T-cell (primary cell): ENCODE measurements at regions of chr10 and their contacts with region 1.

Region 1: GRCh38 chr10:74244097-74244685 is 93.2 kb downstream of the ADK start:
- DNase-seq: peak in 9 of 35 experiments; percentile 9 to 70 (median 19)
- ATAC-seq: no peak
- H3K4me3 ChIP-seq: no peak overlapping the region
- H3K4me3 Mint-ChIP-seq: no peak overlapping the region
- H3K27ac ChIP-seq: no peak overlapping the region
- H3K27ac Mint-ChIP-seq: no peak overlapping the region
- H3K4me1 ChIP-seq: no peaks in the 10 kb centered on the region
- H3K4me1 Mint-ChIP-seq: peaks cover 0 to 2% (median 0%) of the 10 kb centered on the region in 3 donors
- H3K27me3 ChIP-seq: no peaks in the 10 kb centered on the region
- H3K27me3 Mint-ChIP-seq: no peaks in the 10 kb centered on the region

Region 2: GRCh38 chr10:75099952-75100763 is 856.0 kb after region 1 on chr10:
- CTCF ChIA-PET with region 1: interaction called, 13 to 18 read pairs
- POLR2A ChIA-PET with region 1: interaction called in 1 of 2 experiments, 3 read pairs
- DNase-seq: peak; percentile 29 to 88 (median 73)
- ATAC-seq: peak; percentile 88 to 99 (median 91)
- H3K4me3 ChIP-seq: no peak overlapping the region
- H3K4me3 Mint-ChIP-seq: no peak overlapping the region
- H3K27ac ChIP-seq: no peak overlapping the region
- H3K27ac Mint-ChIP-seq: no peak overlapping the region
- H3K4me1 ChIP-seq: peaks cover 0 to 9% of the 10 kb centered on the region in 2 experiments
- H3K4me1 Mint-ChIP-seq: peaks cover 0 to 4% (median 3%) of the 10 kb centered on the region in 3 donors
- H3K27me3 ChIP-seq: peaks cover 0 to 10% of the 10 kb centered on the region in 2 experiments
- H3K27me3 Mint-ChIP-seq: no peaks in the 10 kb centered on the region